BJ (cell line): ENCODE measurements at regions of chr18 and their contacts with region 1.

Region 1: DNA sequence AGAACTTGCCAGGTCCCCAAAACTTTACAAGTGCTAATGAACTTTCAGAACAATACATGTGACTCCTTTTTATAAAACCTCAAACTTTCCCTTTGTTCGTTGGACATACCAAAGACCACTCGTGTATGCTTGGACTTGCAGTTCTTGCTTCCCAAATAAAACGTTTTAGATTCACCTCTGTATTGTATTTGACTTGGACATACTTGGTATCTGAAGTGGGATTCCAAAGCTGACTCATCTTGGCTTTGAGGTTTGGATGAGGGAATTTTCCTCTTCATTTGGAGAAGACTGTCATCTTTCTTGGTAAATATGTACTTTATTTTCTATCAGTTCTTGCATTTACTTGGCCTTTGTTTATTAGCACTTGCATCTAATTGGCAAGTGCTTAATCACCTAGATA is 8.0 kb upstream of the CYB5A start:
- DNase-seq: no peak
- H3K4me3 ChIP-seq: no peak overlapping the region
- H3K27me3 ChIP-seq: no peaks in the 10 kb centered on the region
- CTCF ChIP-seq: no peak

Region 2: GRCh38 chr18:73880387-73880786 is 419.4 kb before region 1 on chr18:
- CTCF ChIA-PET with region 1: no interaction called
- POLR2A ChIA-PET with region 1: no interaction called
- DNase-seq: no peak
- H3K4me3 ChIP-seq: no peak overlapping the region
- H3K27me3 ChIP-seq: no peaks in the 10 kb centered on the region
- CTCF ChIP-seq: no peak

Region 3: DNA sequence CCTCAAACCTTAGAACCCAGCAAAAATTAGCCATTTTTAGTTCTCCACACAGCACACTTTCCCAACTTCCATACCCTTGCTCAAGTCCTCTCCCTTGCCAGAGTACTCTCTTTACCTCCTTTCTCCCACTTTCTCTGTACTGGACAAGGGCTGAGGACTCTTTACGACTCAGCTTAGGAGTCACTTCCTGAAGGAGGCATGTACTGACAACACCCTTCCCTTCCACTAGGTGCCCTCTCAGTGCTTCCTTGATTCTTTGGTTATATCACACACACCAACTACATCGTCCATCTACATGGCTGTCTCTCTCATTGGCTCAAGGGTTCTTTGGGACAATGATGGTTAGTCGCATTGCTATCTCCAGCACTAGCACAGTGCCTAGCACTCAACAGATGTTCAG is 10.7 kb after region 1 on chr18:
- CTCF ChIA-PET with region 1: interaction called, 11 read pairs
- POLR2A ChIA-PET with region 1: no interaction called
- DNase-seq: no peak
- H3K4me3 ChIP-seq: no peak overlapping the region
- H3K27me3 ChIP-seq: no peaks in the 10 kb centered on the region
- CTCF ChIP-seq: peak; percentile 52

Region 4: DNA sequence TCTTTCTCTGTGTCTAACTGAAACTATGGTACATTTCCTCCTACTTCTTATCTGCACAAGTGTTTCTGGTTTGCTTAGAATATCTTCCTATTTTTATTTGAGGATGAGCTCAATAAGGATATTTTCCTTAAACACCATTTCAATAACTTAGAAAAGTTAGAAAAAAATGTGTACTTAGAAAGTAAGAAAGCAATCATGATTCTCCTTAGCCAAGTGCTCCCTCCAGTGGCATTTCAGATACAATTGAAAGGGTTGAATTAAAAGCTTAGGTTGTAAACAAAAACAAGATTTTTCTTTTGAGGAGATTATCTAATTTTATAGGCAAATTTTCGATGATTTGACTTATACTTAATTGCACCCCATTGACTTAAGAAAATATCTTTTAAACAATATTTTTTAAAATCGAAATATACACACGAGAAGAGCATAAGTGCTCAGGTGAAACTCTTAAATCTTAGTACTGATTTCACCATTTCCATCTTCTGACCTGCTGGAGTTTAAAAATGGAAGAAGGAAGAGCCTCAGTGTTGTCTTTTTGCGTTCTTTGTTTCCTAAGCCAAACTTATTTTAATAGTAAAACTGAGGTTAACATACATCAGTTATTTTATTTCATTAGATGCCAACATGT is 42.8 kb after region 1 on chr18:
- CTCF ChIA-PET with region 1: no interaction called
- POLR2A ChIA-PET with region 1: no interaction called
- DNase-seq: peak; percentile 15
- H3K4me3 ChIP-seq: no peak overlapping the region
- H3K27me3 ChIP-seq: no peaks in the 10 kb centered on the region
- CTCF ChIP-seq: peak; percentile 62